ENCODE measurements at regions of chr21 and their contacts with region 1.

Region 1: DNA sequence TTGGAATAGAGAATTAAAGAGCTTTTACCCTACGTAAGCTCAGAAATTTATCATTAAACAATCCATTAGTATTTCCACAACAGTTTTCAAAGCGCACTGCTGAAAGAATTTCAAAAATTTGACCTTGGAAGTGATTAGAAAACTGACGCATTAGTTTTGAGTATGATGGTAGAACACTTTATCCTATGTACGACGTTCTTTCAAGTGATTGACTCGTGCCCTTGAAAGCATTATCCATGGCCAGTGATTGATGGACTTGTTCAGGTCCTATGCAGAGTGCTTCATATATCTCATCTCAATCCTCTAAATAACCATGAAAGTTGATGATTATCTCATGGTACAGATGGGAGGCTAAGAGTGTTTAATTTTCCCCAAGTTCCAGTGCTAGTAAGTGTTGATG is 697.2 kb downstream of the USP25 start:
- DNase-seq: no peak
- H3K4me3 ChIP-seq: peak overlapping the region in 1 of 3 donors; percentile 21
- H3K27ac ChIP-seq: peak overlapping the region in 1 of 2 donors; percentile 65
- H3K4me1 ChIP-seq: peaks cover 0 to 5% of the 10 kb centered on the region in 2 donors
- H3K27me3 ChIP-seq: no peaks in the 10 kb centered on the region
- CTCF ChIP-seq: no peak
- POLR2A ChIP-seq: no peak

Region 2: GRCh38 chr21:16476056-16476825 is 49.3 kb after region 1 on chr21:
- intact Hi-C with region 1: loop called (anchors 5 kb)
- DNase-seq: no peak
- H3K4me3 ChIP-seq: no peak overlapping the region
- H3K27ac ChIP-seq: peak overlapping the region in 1 of 2 donors; percentile 15
- H3K4me1 ChIP-seq: no peaks in the 10 kb centered on the region
- H3K27me3 ChIP-seq: no peaks in the 10 kb centered on the region
- CTCF ChIP-seq: no peak
- POLR2A ChIP-seq: no peak